ENCODE measurements at regions of chr11 and their contacts with region 1.

Region 1: DNA sequence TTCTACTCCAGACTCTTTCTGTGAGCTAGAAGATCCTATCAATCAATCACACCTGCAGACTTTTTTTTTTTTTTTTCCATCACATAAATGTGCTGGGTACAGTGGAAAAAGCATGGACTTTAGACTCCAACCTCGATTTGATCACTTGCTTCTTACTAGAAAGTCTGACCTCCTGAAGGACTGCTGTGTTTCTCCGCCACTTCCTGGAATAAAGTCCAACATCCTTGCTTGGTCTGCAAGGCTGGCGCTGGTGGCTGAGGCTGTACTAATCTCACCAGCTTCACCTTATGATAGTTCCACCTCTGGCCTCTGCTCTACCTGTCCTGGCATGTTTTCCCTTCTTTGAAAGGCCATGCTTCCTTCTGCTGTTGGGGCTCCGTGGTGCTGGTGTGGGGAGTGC is 60.9 kb upstream of the SESN3 start:
- DNase-seq: no peak
- ATAC-seq: no peak
- H3K4me3 ChIP-seq: no peak overlapping the region
- H3K27ac ChIP-seq: no peak overlapping the region
- H3K4me1 ChIP-seq: no peaks in the 10 kb centered on the region
- H3K27me3 ChIP-seq: peaks cover 5% of the 10 kb centered on the region; the same call in 1 of the 2 replicates
- CTCF ChIP-seq: no peak
- POLR2A ChIP-seq: no peak
- RAD21 ChIP-seq: no peak

Region 2: DNA sequence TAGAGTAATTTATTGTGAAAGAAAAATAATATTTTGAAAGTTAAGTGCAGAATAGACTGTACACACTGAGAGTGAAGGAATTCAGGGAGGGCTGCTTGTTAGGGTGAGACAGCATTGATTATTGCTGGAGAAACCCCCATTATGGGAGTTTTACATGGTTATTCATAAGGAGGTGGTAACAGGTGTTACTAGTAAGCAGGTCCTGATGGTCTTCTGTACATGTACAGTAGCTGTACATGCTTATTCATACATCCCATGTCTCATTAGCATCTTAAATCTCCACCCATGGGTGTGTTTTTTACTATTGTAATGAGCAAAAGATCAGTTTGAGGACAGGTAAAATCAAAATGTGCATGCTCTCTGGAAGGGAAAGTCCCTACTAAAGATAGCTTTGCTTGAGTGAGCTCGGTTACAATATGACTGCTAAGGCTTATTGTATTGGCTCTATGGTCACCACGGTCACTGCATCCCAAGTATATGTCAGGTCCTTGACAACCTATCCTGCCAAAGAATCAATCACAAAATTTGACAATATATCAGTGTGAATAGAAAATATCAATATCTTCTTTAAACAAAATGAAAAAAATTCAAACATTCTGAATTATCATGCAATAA is 236.6 kb before region 1 on chr11:
- CTCF ChIA-PET with region 1: no interaction called
- POLR2A ChIA-PET with region 1: no interaction called
- dilution Hi-C with region 1: no loop called
- in situ Hi-C with region 1: no loop called
- intact Hi-C with region 1: no loop called
- DNase-seq: no peak
- ATAC-seq: no peak
- H3K4me3 ChIP-seq: no peak overlapping the region
- H3K27ac ChIP-seq: no peak overlapping the region
- H3K4me1 ChIP-seq: no peaks in the 10 kb centered on the region
- H3K27me3 ChIP-seq: peaks cover 16% of the 10 kb centered on the region
- CTCF ChIP-seq: no peak
- POLR2A ChIP-seq: no peak
- RAD21 ChIP-seq: no peak

Region 3: GRCh38 chr11:95266751-95267374 is 25.1 kb before region 1 on chr11:
- CTCF ChIA-PET with region 1: no interaction called
- POLR2A ChIA-PET with region 1: no interaction called
- dilution Hi-C with region 1: no loop called
- in situ Hi-C with region 1: no loop called
- intact Hi-C with region 1: loop called (anchors 1 kb)
- DNase-seq: no peak
- ATAC-seq: no peak
- H3K4me3 ChIP-seq: no peak overlapping the region
- H3K27ac ChIP-seq: no peak overlapping the region
- H3K4me1 ChIP-seq: no peaks in the 10 kb centered on the region
- H3K27me3 ChIP-seq: no peaks in the 10 kb centered on the region
- CTCF ChIP-seq: no peak
- POLR2A ChIP-seq: no peak
- RAD21 ChIP-seq: no peak

Measured in IMR-90 (cell line).